A673 (cell line): ENCODE measurements at regions of chr9 and their contacts with region 1.

Region 1: DNA sequence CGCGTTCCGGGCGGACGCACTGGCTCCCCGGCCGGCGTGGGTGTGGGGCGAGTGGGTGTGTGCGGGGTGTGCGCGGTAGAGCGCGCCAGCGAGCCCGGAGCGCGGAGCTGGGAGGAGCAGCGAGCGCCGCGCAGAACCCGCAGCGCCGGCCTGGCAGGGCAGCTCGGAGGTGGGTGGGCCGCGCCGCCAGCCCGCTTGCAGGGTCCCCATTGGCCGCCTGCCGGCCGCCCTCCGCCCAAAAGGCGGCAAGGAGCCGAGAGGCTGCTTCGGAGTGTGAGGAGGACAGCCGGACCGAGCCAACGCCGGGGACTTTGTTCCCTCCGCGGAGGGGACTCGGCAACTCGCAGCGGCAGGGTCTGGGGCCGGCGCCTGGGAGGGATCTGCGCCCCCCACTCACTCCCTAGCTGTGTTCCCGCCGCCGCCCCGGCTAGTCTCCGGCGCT is at the start of gene DAPK1:
- DNase-seq: peak; percentile 90
- H3K4me3 ChIP-seq: peak within 1 kb of the TSS; percentile 91
- H3K27ac ChIP-seq: peak within 1 kb of the TSS; percentile 99
- H3K4me1 ChIP-seq: peaks cover 62% of the 10 kb centered on the region
- H3K27me3 ChIP-seq: no peaks in the 10 kb centered on the region
- CTCF ChIP-seq: peak; percentile 37; the same call in 1 of the 2 replicates
- total RNA-seq, gene DAPK1: 380 and 386 TPM in 2 replicates

Region 2: GRCh38 chr9:87370003-87370685 is 127.5 kb before region 1 on chr9:
- CTCF ChIA-PET with region 1: interaction called, 16 read pairs
- POLR2A ChIA-PET with region 1: no interaction called
- intact Hi-C with region 1: no loop called
- DNase-seq: no peak
- H3K4me3 ChIP-seq: no peak overlapping the region
- H3K27ac ChIP-seq: no peak overlapping the region
- H3K4me1 ChIP-seq: no peaks in the 10 kb centered on the region
- H3K27me3 ChIP-seq: no peaks in the 10 kb centered on the region
- CTCF ChIP-seq: no peak

Region 3: GRCh38 chr9:87405677-87406542 is 91.7 kb before region 1 on chr9:
- CTCF ChIA-PET with region 1: no interaction called
- POLR2A ChIA-PET with region 1: no interaction called
- intact Hi-C with region 1: loop called (anchors 5 kb)
- DNase-seq: peak; percentile 90
- H3K4me3 ChIP-seq: no peak overlapping the region
- H3K27ac ChIP-seq: peak overlapping the region; percentile 93
- H3K4me1 ChIP-seq: peaks cover 52% of the 10 kb centered on the region
- H3K27me3 ChIP-seq: no peaks in the 10 kb centered on the region
- CTCF ChIP-seq: no peak

Region 4: GRCh38 chr9:87529671-87530070 is 32.0 kb after region 1 on chr9:
- CTCF ChIA-PET with region 1: no interaction called
- POLR2A ChIA-PET with region 1: no interaction called
- intact Hi-C with region 1: loop called (anchors 5 kb)
- DNase-seq: peak; percentile 48
- H3K4me3 ChIP-seq: no peak overlapping the region
- H3K27ac ChIP-seq: peak overlapping the region; percentile 76
- H3K4me1 ChIP-seq: peaks cover 84% of the 10 kb centered on the region
- H3K27me3 ChIP-seq: no peaks in the 10 kb centered on the region
- CTCF ChIP-seq: no peak

Region 5: DNA sequence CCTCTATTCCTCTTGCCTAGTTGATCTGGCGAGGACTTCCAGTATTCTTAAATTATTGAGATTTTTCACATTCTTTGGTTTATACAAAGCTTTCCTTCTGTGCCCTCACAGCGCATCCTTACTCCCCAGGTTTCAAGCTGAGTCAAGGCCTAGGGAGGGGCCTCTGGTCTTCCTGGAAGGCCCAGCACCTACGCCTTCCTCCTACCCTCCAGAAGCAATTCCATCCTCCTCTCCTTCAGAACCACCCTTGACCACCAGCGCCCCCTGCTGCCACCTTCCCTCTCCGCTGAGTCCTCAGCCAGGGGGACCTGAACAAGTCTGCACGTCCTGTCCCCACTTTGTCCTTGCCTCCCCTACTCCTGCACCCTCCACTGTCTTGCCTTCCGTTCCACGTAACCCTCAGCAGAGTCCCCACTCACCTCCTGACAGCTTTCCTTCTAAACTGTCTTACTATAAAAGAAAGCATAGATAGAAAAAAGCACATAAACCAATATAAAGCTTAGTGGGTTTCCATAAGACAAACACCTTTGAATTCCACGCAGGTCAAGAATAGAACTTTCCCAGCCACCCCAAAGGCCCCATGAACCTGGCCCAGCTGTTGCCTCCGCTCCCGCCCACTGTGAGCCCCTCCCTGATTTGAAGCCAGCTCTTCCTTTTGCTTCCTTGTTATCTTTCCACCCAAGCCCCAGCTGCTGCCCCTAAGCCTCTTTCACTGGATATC is 165.3 kb after region 1 on chr9:
- CTCF ChIA-PET with region 1: no interaction called
- POLR2A ChIA-PET with region 1: no interaction called
- intact Hi-C with region 1: loop called (anchors 5 kb)
- DNase-seq: peak; percentile 81
- H3K4me3 ChIP-seq: no peak overlapping the region
- H3K27ac ChIP-seq: peak overlapping the region; percentile 48
- H3K4me1 ChIP-seq: peaks cover 18% of the 10 kb centered on the region
- H3K27me3 ChIP-seq: no peaks in the 10 kb centered on the region
- CTCF ChIP-seq: peak; percentile 81